ENCODE measurements at regions of chr9 and their contacts with region 1.

Region 1: DNA sequence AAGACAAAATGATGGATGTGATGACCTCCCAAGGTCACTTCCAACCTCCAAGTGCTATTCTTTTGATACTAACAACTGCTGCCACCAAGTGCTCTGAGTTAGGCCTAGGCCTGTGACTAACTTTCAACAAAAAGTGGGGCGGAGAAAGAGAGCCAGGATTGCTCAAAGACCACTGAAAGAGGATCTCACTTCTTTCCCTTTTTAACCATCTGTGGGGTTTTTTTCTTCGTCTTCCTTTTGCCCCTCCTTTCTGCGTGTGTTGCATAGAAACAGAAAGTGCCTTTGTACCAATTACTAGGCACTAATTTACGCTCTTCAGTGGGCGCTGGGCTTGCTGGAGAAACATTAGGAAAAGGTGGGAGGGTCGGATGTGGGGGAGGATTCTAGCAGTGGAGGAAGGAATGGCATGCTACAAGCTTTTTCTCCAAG is 8.0 kb downstream of the KLF9 start:
- DNase-seq: peak in 1 of 5 donors; percentile 42
- H3K4me3 ChIP-seq: no peak overlapping the region
- H3K4me3 Mint-ChIP-seq: peak overlapping the region; percentile 79 to 90 (median 84)
- H3K27ac ChIP-seq: peak overlapping the region; percentile 14
- H3K27ac Mint-ChIP-seq: peak overlapping the region; percentile 81 to 94 (median 89)
- H3K4me1 ChIP-seq: peaks cover 88% of the 10 kb centered on the region
- H3K4me1 Mint-ChIP-seq: peaks cover 66 to 91% (median 78%) of the 10 kb centered on the region in 4 donors
- H3K27me3 ChIP-seq: no peaks in the 10 kb centered on the region
- H3K27me3 Mint-ChIP-seq: no peaks in the 10 kb centered on the region

Region 2: GRCh38 chr9:70192716-70193115 is 213.7 kb before region 1 on chr9:
- CTCF ChIA-PET with region 1: no interaction called
- POLR2A ChIA-PET with region 1: no interaction called
- intact Hi-C with region 1: no loop called
- DNase-seq: no peak
- H3K4me3 ChIP-seq: no peak overlapping the region
- H3K4me3 Mint-ChIP-seq: no peak overlapping the region
- H3K27ac ChIP-seq: no peak overlapping the region
- H3K27ac Mint-ChIP-seq: no peak overlapping the region
- H3K4me1 ChIP-seq: no peaks in the 10 kb centered on the region
- H3K4me1 Mint-ChIP-seq: no peaks in the 10 kb centered on the region
- H3K27me3 ChIP-seq: no peaks in the 10 kb centered on the region
- H3K27me3 Mint-ChIP-seq: peaks cover 9% of the 10 kb centered on the region in 2 donors

Region 3: GRCh38 chr9:70392189-70392588 is 14.3 kb before region 1 on chr9:
- CTCF ChIA-PET with region 1: interaction called, 37 read pairs
- POLR2A ChIA-PET with region 1: interaction called, 10 read pairs
- intact Hi-C with region 1: no loop called
- DNase-seq: no peak
- H3K4me3 ChIP-seq: no peak overlapping the region
- H3K4me3 Mint-ChIP-seq: peak overlapping the region in 2 of 8 donors; percentile 11 to 31
- H3K27ac ChIP-seq: no peak overlapping the region
- H3K27ac Mint-ChIP-seq: peak overlapping the region in 2 of 7 donors; percentile 17 to 31
- H3K4me1 ChIP-seq: peaks cover 74% of the 10 kb centered on the region
- H3K4me1 Mint-ChIP-seq: peaks cover 53 to 88% (median 74%) of the 10 kb centered on the region in 4 donors
- H3K27me3 ChIP-seq: no peaks in the 10 kb centered on the region
- H3K27me3 Mint-ChIP-seq: no peaks in the 10 kb centered on the region

Measured in CD4-positive, alpha-beta memory T cell (primary cell).